OCI-LY7 (cell line): ENCODE measurements at regions of chr3 and their contacts with region 1.

Region 1: DNA sequence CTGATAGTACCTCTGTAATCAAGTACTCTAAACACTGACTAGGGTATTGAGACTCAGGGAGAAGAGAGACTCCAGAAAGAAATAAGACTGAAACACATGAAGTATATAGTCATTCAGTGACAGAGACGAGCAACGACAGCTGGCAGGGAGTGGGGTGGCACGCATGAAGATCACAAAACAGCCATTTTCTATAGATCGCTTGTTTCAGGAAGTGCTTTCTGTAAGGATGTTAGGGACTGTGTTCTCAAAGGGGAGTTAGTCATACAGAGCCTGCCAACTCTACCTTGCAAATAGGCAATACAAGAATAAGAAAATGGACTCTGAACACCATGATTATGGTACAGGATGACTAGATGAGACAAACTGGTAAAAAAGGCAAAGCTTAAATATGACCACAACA is 139.5 kb downstream of the TBL1XR1 start:
- DNase-seq: peak; percentile 58
- H3K4me3 ChIP-seq: peak overlapping the region; percentile 25
- H3K27ac ChIP-seq: peak overlapping the region; percentile 47
- H3K4me1 ChIP-seq: peaks cover 77% of the 10 kb centered on the region
- CTCF ChIP-seq: no peak

Region 2: GRCh38 chr3:177069514-177070329 is 12.0 kb after region 1 on chr3:
- CTCF ChIA-PET with region 1: no interaction called
- POLR2A ChIA-PET with region 1: interaction called, 19 read pairs
- intact Hi-C with region 1: no loop called
- DNase-seq: no peak
- H3K4me3 ChIP-seq: no peak overlapping the region
- H3K27ac ChIP-seq: no peak overlapping the region
- H3K4me1 ChIP-seq: peaks cover 16% of the 10 kb centered on the region
- CTCF ChIP-seq: no peak

Region 3: DNA sequence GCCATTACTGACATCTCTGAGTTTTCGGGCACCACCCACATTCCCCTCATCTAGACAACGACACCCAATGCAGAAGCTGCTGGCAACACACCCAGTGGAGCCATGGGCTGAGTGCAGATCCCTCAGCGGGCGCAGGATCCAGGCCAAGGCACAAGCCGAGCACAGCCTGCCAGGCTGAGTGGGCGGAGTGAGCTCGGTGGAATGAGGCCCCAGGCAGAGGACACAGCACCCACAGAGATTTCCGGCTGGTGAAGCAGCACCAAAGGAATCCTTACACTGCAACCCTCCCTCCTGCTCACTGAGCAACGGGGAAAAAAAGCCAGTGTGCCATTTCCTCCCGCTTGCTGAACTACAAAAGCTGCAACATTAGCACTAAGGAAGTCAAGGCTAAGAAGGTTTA is 1979.6 kb after region 1 on chr3:
- CTCF ChIA-PET with region 1: no interaction called
- POLR2A ChIA-PET with region 1: no interaction called
- intact Hi-C with region 1: no loop called
- DNase-seq: no peak
- H3K4me3 ChIP-seq: no peak overlapping the region
- H3K27ac ChIP-seq: no peak overlapping the region
- H3K4me1 ChIP-seq: no peaks in the 10 kb centered on the region
- CTCF ChIP-seq: no peak